ENCODE measurements at regions of chr17 and their contacts with region 1.

Region 1: DNA sequence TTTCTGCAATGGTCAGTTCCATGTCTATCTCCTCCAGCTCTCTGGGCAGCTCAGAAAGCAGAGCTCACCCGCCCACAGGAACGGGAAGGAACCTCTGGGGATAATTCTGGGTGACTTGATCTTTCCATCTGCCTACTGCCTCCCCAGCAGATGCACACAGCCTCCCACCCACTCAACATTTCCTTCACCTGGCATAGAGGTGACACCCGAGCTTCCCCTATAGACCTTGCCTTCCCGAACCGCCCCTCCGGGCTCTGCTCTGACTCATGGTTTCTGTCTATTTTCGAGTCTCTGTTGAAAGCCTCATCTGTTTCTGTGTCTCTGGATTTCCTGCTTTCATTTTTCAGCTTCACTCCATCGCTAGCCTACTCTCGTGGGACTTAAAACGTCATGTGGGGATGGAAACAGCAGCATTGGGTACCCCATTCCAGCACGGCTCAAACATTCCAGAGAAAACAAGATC is 11.4 kb downstream of the GGA3 start:
- DNase-seq: no peak
- ATAC-seq: no peak; a peak in 1 of 6 replicates
- H3K4me3 ChIP-seq: no peak overlapping the region
- H3K27ac ChIP-seq: no peak overlapping the region
- H3K4me1 ChIP-seq: no peaks in the 10 kb centered on the region
- CTCF ChIP-seq: no peak
- EP300 ChIP-seq: no peak
- POLR2A ChIP-seq: no peak
- RAD21 ChIP-seq: no peak

Region 2: GRCh38 chr17:74408262-74408661 is 841.8 kb before region 1 on chr17:
- CTCF ChIA-PET with region 1: no interaction called
- POLR2A ChIA-PET with region 1: no interaction called
- DNase-seq: peak; percentile 75 to 78
- ATAC-seq: peak; percentile 94 to 97
- H3K4me3 ChIP-seq: no peak overlapping the region
- H3K27ac ChIP-seq: peak overlapping the region in 1 of 2 experiments; percentile 61; a peak in 3 of 6 replicates
- H3K4me1 ChIP-seq: peaks cover 15% of the 10 kb centered on the region
- CTCF ChIP-seq: peak; percentile 60
- EP300 ChIP-seq: no peak
- POLR2A ChIP-seq: no peak
- RAD21 ChIP-seq: peak; percentile 77 to 79

Region 3: DNA sequence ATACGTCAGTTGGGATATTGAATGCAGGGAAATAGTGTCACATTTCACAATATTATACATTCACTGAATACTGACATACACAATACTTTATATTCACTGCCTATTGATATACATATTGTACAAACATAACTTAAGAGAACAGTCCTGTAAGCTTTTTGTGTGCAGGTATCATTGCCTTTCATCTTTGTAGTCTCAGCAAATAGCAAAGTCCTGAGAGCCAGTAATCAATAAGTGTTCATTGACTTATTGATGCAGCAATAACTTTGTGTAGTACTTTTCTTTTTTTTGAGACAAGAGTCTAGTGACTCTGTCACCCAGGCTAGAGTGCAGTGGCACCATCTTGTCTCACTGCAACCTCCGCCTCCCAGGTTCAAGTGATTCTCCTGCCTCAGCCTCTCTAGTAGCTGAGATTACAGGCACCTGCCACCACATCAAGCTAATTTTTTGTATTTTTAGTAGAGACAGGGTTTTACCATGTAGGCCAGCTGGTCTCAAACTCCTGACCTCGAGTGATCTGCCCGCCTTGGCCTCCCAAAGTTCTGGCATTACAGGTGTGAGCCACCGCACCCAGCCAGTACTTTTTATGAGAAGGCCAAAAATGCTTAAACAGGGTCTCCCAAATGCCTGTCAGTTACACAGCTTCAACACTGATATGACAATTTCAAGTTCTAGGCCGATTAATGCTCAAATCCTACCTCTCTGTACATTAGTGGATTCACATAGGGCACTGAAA is 50.0 kb before region 1 on chr17:
- CTCF ChIA-PET with region 1: no interaction called
- POLR2A ChIA-PET with region 1: no interaction called
- DNase-seq: no peak
- ATAC-seq: no peak
- H3K4me3 ChIP-seq: no peak overlapping the region
- H3K27ac ChIP-seq: no peak overlapping the region
- H3K4me1 ChIP-seq: peaks cover 4% of the 10 kb centered on the region; the same call in 1 of the 3 replicates
- CTCF ChIP-seq: no peak
- EP300 ChIP-seq: no peak
- POLR2A ChIP-seq: no peak
- RAD21 ChIP-seq: no peak

Region 4: GRCh38 chr17:75261336-75262111 is 11.5 kb after region 1 on chr17 and contains the starts of genes GGA3 and MRPS7:
- CTCF ChIA-PET with region 1: interaction called, 16 read pairs
- POLR2A ChIA-PET with region 1: interaction called, 4 read pairs
- DNase-seq: peak; percentile 95 to 96
- ATAC-seq: peak; percentile 96 to 97
- H3K4me3 ChIP-seq: peak within 1 kb of the TSS; percentile 97
- H3K27ac ChIP-seq: peak within 1 kb of the TSS; percentile 96
- H3K4me1 ChIP-seq: peaks cover 22% of the 10 kb centered on the region
- CTCF ChIP-seq: no peak
- EP300 ChIP-seq: no peak
- POLR2A ChIP-seq: peak; percentile 91
- RAD21 ChIP-seq: no peak
- polyA plus RNA-seq, gene GGA3: 40.9 and 43.6 TPM in 2 replicates
- polyA plus RNA-seq, gene MRPS7: 144 and 157 TPM in 2 replicates

Region 5: GRCh38 chr17:75289115-75289831 is 39.2 kb after region 1 on chr17 and contains the start of gene SLC25A19:
- CTCF ChIA-PET with region 1: no interaction called
- POLR2A ChIA-PET with region 1: no interaction called
- DNase-seq: peak; percentile 100
- ATAC-seq: peak; percentile 97 to 99
- H3K4me3 ChIP-seq: peak within 1 kb of the TSS; percentile 72
- H3K27ac ChIP-seq: peak within 1 kb of the TSS; percentile 86 to 90
- H3K4me1 ChIP-seq: peaks cover 12% of the 10 kb centered on the region
- CTCF ChIP-seq: no peak
- EP300 ChIP-seq: no peak
- POLR2A ChIP-seq: peak; percentile 95
- RAD21 ChIP-seq: peak; percentile 15 to 22; a peak in 2 of 5 replicates
- polyA plus RNA-seq, gene SLC25A19: 14.8 and 15.3 TPM in 2 replicates